OCI-LY7 (cell line): ENCODE measurements at regions of chr6 and their contacts with region 1.

Region 1: GRCh38 chr6:52786249-52786956 is 17.2 kb downstream of the GSTA1 start:
- DNase-seq: no peak
- H3K4me3 ChIP-seq: no peak overlapping the region
- H3K27ac ChIP-seq: no peak overlapping the region
- H3K4me1 ChIP-seq: no peaks in the 10 kb centered on the region
- CTCF ChIP-seq: no peak

Region 2: DNA sequence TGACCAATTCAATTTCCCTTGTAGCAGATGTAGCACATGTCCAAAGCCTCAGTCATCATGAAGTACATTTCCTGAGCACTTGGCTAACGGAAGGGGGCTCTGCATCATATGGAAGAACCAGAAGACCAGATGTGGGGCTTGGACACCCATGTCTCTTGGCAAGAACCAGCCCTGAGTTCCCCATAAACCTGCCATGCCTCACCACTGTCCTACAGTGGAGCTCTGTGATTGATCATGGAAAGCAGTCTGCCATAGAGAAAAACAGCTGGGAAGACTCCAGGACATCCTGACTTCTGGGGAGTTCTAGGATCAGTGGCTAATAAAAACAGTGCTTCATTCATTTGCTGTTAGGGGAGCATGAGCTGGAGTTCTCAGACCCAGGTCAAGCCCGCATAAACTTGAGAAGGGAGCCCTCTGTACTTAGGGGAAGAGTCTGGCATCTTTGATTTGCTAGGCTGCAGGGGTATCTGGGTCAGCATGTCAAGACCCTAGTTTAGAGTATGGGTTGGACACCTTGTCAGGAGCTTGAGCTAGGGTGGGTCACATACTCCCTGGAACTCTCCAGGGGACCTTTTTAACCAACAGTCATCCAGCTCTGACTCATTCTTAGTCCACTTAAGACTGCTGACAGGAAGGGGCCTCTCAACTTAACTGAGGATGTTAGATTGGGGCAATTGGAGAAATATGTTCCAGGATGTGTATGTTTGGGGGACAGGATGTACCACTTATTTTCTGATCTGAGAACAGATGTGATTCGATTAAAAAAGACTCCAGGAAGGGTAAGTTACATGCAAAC is 183.2 kb before region 1 on chr6:
- CTCF ChIA-PET with region 1: no interaction called
- POLR2A ChIA-PET with region 1: no interaction called
- intact Hi-C with region 1: no loop called
- DNase-seq: peak; percentile 42
- H3K4me3 ChIP-seq: no peak overlapping the region
- H3K27ac ChIP-seq: peak overlapping the region; percentile 23
- H3K4me1 ChIP-seq: peaks cover 27% of the 10 kb centered on the region
- CTCF ChIP-seq: 0 out of 2 replicates have a peak, but pooled peaks have one; percentile 19

Region 3: DNA sequence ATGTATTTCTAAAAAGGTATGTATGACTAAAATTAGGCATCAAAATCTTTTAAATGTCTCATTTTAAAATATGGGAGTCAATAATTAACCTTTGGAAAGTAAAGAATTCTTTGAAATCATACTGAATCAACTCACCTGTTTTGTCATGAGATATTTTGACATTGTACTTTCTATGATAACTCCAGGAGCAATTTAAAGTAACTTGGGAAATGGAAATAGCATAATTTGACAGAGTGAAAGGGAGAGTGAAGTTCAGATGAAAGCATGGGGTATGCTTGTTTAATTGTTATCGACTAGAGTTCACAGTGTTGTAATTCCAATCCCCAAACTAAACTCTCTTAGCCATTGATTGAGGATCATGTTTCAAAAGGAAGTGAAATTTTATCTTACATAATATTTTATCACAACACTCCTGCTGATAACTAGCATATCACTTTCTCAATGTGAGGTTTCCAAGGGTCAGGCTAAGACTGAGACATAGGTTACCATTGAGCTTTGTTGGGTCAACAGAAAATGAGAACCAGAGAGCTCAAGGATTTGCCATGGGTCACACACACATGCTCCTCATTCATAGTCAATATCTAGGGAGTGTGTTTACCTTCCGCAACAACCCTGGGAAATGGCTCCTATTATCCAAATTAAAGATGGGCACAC is 14.9 kb after region 1 on chr6:
- CTCF ChIA-PET with region 1: no interaction called
- POLR2A ChIA-PET with region 1: no interaction called
- intact Hi-C with region 1: no loop called
- DNase-seq: no peak
- H3K4me3 ChIP-seq: no peak overlapping the region
- H3K27ac ChIP-seq: no peak overlapping the region
- H3K4me1 ChIP-seq: no peaks in the 10 kb centered on the region
- CTCF ChIP-seq: no peak

Region 4: DNA sequence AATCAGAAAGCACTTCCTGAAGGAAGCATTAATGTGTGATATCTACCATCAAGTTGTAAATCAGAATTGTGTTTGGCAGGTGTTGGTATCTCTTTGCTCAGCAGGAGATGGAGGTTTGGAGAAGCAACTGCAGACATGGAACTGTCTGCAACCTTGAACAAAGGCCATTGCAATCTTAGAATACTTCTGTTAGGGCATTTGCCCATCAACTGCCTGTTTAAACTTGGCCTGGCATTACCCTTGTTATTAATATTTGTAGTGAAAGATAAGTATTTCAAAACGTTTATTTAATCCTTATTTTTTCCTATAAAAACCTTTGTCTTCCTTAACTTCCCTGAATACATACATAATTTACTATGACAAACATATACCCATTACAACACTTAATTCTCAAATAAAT is 40.1 kb after region 1 on chr6:
- CTCF ChIA-PET with region 1: no interaction called
- POLR2A ChIA-PET with region 1: no interaction called
- intact Hi-C with region 1: loop called (anchors 1 kb)
- DNase-seq: no peak
- H3K4me3 ChIP-seq: no peak overlapping the region
- H3K27ac ChIP-seq: no peak overlapping the region
- H3K4me1 ChIP-seq: no peaks in the 10 kb centered on the region
- CTCF ChIP-seq: no peak

Region 5: GRCh38 chr6:52839119-52840055 is 53.0 kb after region 1 on chr6:
- CTCF ChIA-PET with region 1: no interaction called
- POLR2A ChIA-PET with region 1: no interaction called
- intact Hi-C with region 1: no loop called
- DNase-seq: peak; percentile 50
- H3K4me3 ChIP-seq: no peak overlapping the region
- H3K27ac ChIP-seq: no peak overlapping the region
- H3K4me1 ChIP-seq: no peaks in the 10 kb centered on the region
- CTCF ChIP-seq: peak; percentile 83